ENCODE measurements at regions of chr3 and their contacts with region 1.

Region 1: DNA sequence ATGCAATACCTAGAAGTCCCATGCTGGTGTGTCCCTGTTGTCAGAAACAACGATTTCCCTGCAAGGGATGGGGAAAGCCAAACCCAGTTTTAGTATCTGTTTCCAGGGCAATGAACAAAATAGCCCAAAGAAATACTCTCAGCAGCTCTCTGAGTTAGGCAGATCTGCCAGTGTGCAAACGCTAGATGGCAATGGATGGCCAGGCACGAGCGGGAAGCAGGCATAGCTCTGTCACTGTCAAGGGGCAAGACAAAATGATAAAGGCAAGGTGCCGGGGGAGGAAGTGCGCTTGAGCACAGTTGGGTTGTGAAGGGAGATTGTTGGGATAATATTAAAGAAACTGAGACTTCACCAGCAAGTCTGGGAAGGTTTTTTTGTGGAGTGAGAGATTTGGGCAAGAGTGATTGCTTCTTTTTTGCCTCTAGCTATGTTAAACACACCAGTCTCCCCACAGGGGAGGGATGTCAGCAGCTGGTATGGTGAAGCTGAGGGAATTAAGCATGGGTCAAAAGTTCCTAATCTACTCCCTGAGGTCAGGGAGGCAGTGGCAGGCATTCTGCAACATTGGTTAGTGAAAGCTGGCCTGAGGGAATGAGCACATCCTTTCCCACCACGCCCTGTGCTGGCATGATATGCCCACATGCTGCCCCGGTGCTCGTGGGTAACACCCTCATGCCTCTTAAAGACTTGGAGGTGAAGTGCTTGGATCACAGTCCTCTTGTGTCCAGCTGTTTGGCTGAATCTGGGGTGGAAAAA is 117.5 kb downstream of the PDCD6IP start:
- DNase-seq: peak in 2 of 4 experiments; percentile 71 to 83
- ATAC-seq: peak; percentile 70
- H3K4me3 ChIP-seq: no peak overlapping the region
- H3K27ac ChIP-seq: no peak overlapping the region
- H3K4me1 ChIP-seq: peaks cover 29 to 57% of the 10 kb centered on the region in 2 experiments
- H3K27me3 ChIP-seq: no peaks in the 10 kb centered on the region
- CTCF ChIP-seq: peak; percentile 69 to 86 (median 75)
- EP300 ChIP-seq: no peak
- POLR2A ChIP-seq: no peak
- RAD21 ChIP-seq: peak; percentile 85 to 87

Region 2: GRCh38 chr3:33900809-33901505 is 15.0 kb before region 1 on chr3:
- CTCF ChIA-PET with region 1: no interaction called
- POLR2A ChIA-PET with region 1: interaction called, 21 read pairs
- in situ Hi-C with region 1: no loop called
- intact Hi-C with region 1: loop called (anchors 1 kb)
- DNase-seq: peak; percentile 92 to 98 (median 94)
- ATAC-seq: peak; percentile 84
- H3K4me3 ChIP-seq: no peak overlapping the region
- H3K27ac ChIP-seq: peak overlapping the region; percentile 99
- H3K4me1 ChIP-seq: peaks cover 47 to 65% of the 10 kb centered on the region in 2 experiments
- H3K27me3 ChIP-seq: no peaks in the 10 kb centered on the region
- CTCF ChIP-seq: peak in 1 of 3 experiments; percentile 11; a peak in 1 of 6 replicates
- EP300 ChIP-seq: peak; percentile 98
- POLR2A ChIP-seq: no peak; the same call in 1 of the 2 replicates
- RAD21 ChIP-seq: peak; percentile 18 to 35; a peak in 2 of 4 replicates

Region 3: DNA sequence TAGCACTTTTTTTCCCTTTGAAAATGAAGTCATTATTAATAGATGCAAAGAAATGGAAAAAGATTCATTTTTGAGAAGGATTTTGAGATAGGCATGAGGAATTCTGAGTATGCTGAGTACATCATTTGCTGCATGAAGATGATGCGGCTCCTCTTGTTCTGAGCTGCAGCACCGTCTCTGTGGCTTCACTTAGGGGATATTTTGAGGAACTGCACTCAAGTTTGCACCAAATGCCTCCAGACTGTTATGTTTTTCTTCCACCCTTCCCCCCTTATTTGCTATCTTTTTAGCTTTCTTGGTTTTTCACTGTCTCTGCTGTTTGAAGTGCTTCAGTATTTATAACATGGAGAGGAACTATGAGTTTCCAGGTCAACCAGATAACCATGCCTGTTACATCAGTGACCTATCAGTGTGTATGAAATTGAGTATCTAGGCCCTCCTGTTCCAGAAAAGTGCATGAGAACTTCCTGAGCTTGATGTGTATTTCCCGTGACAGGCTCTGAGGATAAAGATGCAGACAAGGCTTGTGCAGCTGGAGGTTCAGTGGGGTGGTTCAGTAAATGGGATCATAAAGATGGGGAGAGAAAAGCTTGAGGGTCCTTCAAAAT is 11.1 kb after region 1 on chr3:
- CTCF ChIA-PET with region 1: no interaction called
- POLR2A ChIA-PET with region 1: interaction called, 24 read pairs
- in situ Hi-C with region 1: no loop called
- intact Hi-C with region 1: no loop called
- DNase-seq: no peak
- ATAC-seq: peak; percentile 56
- H3K4me3 ChIP-seq: no peak overlapping the region
- H3K27ac ChIP-seq: no peak overlapping the region
- H3K4me1 ChIP-seq: peaks cover 0 to 8% of the 10 kb centered on the region in 2 experiments; a peak in 2 of 5 replicates
- H3K27me3 ChIP-seq: no peaks in the 10 kb centered on the region
- CTCF ChIP-seq: peak in 2 of 3 experiments; percentile 25; a peak in 3 of 6 replicates
- EP300 ChIP-seq: no peak
- POLR2A ChIP-seq: no peak
- RAD21 ChIP-seq: peak in 1 of 2 experiments; percentile 30; a peak in 3 of 4 replicates

Region 4: GRCh38 chr3:33936921-33937525 is 21.1 kb after region 1 on chr3:
- CTCF ChIA-PET with region 1: no interaction called
- POLR2A ChIA-PET with region 1: interaction called, 26 read pairs
- in situ Hi-C with region 1: no loop called
- intact Hi-C with region 1: loop called (anchors 1 kb)
- DNase-seq: peak in 1 of 4 experiments; percentile 41
- ATAC-seq: peak; percentile 50
- H3K4me3 ChIP-seq: peak overlapping the region; percentile 38
- H3K27ac ChIP-seq: peak overlapping the region; percentile 78
- H3K4me1 ChIP-seq: peaks cover 12 to 55% of the 10 kb centered on the region in 2 experiments
- H3K27me3 ChIP-seq: no peaks in the 10 kb centered on the region
- CTCF ChIP-seq: no peak
- EP300 ChIP-seq: no peak
- POLR2A ChIP-seq: no peak
- RAD21 ChIP-seq: no peak

Region 5: GRCh38 chr3:34012102-34012461 is 96.1 kb after region 1 on chr3:
- CTCF ChIA-PET with region 1: no interaction called
- POLR2A ChIA-PET with region 1: interaction called, 3 read pairs
- in situ Hi-C with region 1: no loop called
- intact Hi-C with region 1: loop called (anchors 1 kb)
- DNase-seq: peak; percentile 31 to 44 (median 34)
- ATAC-seq: no peak
- H3K4me3 ChIP-seq: no peak overlapping the region
- H3K27ac ChIP-seq: no peak overlapping the region
- H3K4me1 ChIP-seq: peaks cover 3 to 9% of the 10 kb centered on the region in 2 experiments
- H3K27me3 ChIP-seq: no peaks in the 10 kb centered on the region
- CTCF ChIP-seq: no peak
- EP300 ChIP-seq: no peak
- POLR2A ChIP-seq: no peak
- RAD21 ChIP-seq: no peak

Measured in K562 (cell line).